Lower leg skin (tissue), 4 donors: ENCODE measurements at regions of chr2 and their contacts with region 1.

Region 1: GRCh38 chr2:188170356-188170755 is 121.3 kb upstream of the GULP1 start:
- DNase-seq: no peak
- H3K4me3 ChIP-seq: no peak overlapping the region
- CTCF ChIP-seq: no peak
- POLR2A ChIP-seq: no peak

Region 2: DNA sequence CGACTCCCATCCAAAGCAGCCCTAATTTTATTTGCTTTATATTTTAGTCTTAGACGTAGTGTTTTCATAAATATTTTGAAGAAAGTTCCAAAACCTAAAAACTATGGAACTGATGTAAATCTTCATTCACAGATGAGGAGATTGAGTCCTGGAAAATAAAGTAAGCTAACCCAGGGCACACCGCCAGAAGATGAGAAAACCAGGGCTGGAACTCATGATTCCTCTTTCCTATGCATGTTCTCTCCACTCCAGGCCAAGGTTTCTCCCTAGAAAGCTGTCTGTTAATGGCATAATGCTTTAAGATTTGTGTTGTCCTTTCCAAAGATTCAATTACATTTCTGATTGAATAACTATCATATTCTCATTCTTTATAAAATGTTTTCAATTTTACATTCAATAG is 1762.7 kb before region 1 on chr2:
- intact Hi-C with region 1: no loop called
- DNase-seq: no peak
- H3K4me3 ChIP-seq: no peak overlapping the region
- CTCF ChIP-seq: no peak
- POLR2A ChIP-seq: no peak

Region 3: GRCh38 chr2:187093771-187094412 is 1076.5 kb before region 1 on chr2:
- intact Hi-C with region 1: loop called (anchors 5 kb)
- DNase-seq: no peak
- H3K4me3 ChIP-seq: no peak overlapping the region
- CTCF ChIP-seq: no peak
- POLR2A ChIP-seq: no peak

Region 4: GRCh38 chr2:188068093-188068492 is 102.3 kb before region 1 on chr2:
- intact Hi-C with region 1: no loop called
- DNase-seq: no peak
- H3K4me3 ChIP-seq: no peak overlapping the region
- CTCF ChIP-seq: no peak
- POLR2A ChIP-seq: no peak